ENCODE measurements at regions of chr9 and their contacts with region 1.

Region 1: DNA sequence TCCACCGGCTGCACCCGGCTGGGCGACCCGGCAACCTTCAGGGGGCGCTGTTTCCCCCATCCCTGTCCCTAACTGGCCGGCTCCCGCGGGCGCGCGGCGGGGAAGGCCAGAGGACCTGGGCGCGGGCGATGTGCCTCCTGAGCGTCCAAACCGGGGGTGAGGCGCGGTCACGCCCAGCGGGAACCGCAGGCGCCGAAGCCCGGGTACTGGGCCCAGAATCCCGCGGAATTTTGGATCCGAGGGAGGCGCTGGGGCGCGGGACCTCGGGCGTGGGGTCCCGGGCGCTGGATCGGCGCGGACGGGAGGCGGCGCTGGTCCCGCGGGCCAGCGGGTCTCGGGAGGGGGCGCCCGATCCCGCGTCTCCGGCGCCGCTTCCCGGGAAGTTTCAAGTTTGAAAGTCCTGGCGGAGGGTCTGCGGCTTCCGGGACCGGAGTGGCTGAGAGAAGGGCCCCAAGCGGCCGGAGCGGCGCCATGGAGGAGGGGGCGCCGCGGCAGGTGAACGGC is at the start of gene PKN3:
- DNase-seq: no peak
- H3K4me3 ChIP-seq: peak within 1 kb of the TSS; percentile 75
- H3K27me3 ChIP-seq: no peaks in the 10 kb centered on the region
- CTCF ChIP-seq: peak; percentile 92
- polyA plus RNA-seq, gene PKN3: 2.8 and 3.4 TPM in 2 replicates

Region 2: DNA sequence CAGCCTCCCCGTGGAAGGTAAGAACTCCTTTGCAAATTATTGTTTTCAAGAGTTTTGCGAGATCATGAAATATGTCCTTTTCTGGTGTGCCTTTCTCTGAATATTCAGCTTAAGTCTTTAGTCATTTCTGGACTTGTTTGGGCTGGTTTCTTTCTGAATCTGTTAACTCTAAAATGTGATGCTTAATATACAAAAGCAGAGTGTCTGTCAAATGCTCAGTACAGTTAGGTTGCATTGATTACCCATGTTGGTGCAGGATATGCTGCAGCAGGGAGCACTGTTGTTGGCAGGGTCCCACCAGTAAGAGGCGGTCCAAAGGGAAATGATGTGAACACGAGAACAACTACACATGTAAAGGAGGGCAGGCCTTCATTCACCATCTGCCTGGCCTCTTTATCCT is 102.4 kb before region 1 on chr9:
- CTCF ChIA-PET with region 1: no interaction called
- POLR2A ChIA-PET with region 1: no interaction called
- DNase-seq: no peak
- H3K4me3 ChIP-seq: no peak overlapping the region
- H3K27me3 ChIP-seq: no peaks in the 10 kb centered on the region
- CTCF ChIP-seq: no peak

Region 3: GRCh38 chr9:128688512-128689292 is 13.8 kb before region 1 on chr9 and contains the start of gene SET:
- CTCF ChIA-PET with region 1: interaction called, 41 read pairs
- POLR2A ChIA-PET with region 1: no interaction called
- DNase-seq: peak; percentile 62
- H3K4me3 ChIP-seq: peak within 1 kb of the TSS; percentile 90
- H3K27me3 ChIP-seq: no peaks in the 10 kb centered on the region
- CTCF ChIP-seq: no peak
- polyA plus RNA-seq, gene SET: 51.6 and 130 TPM in 2 replicates

Region 4: GRCh38 chr9:128723866-128724743 is 21.6 kb after region 1 on chr9 and contains the start of gene ZDHHC12:
- CTCF ChIA-PET with region 1: interaction called, 10 read pairs
- POLR2A ChIA-PET with region 1: no interaction called
- DNase-seq: peak; percentile 63
- H3K4me3 ChIP-seq: peak within 1 kb of the TSS; percentile 69
- H3K27me3 ChIP-seq: no peaks in the 10 kb centered on the region
- CTCF ChIP-seq: no peak
- polyA plus RNA-seq, gene ZDHHC12: 41.6 and 60.0 TPM in 2 replicates

Region 5: GRCh38 chr9:128782669-128783068 is 80.2 kb after region 1 on chr9:
- CTCF ChIA-PET with region 1: no interaction called
- POLR2A ChIA-PET with region 1: no interaction called
- DNase-seq: no peak
- H3K4me3 ChIP-seq: no peak overlapping the region
- H3K27me3 ChIP-seq: no peaks in the 10 kb centered on the region
- CTCF ChIP-seq: no peak

Measured in BJ (cell line).